ENCODE measurements at regions of chr17 and their contacts with region 1.

Region 1: GRCh38 chr17:27381007-27381501 is 75.2 kb upstream of the KSR1 start:
- DNase-seq: peak; percentile 92
- ATAC-seq: peak; percentile 92
- H3K4me3 Mint-ChIP-seq: no peak overlapping the region
- H3K27ac Mint-ChIP-seq: no peak overlapping the region
- H3K4me1 Mint-ChIP-seq: no peaks in the 10 kb centered on the region
- H3K27me3 Mint-ChIP-seq: no peaks in the 10 kb centered on the region
- CTCF ChIP-seq: peak; percentile 100

Region 2: GRCh38 chr17:27236717-27237315 is 144.2 kb before region 1 on chr17:
- CTCF ChIA-PET with region 1: interaction called, 18 read pairs
- POLR2A ChIA-PET with region 1: no interaction called
- DNase-seq: peak; percentile 71
- ATAC-seq: peak; percentile 53
- H3K4me3 Mint-ChIP-seq: no peak overlapping the region
- H3K27ac Mint-ChIP-seq: no peak overlapping the region
- H3K4me1 Mint-ChIP-seq: peaks cover 7% of the 10 kb centered on the region
- H3K27me3 Mint-ChIP-seq: peaks cover 3% of the 10 kb centered on the region; the same call in 1 of the 2 replicates
- CTCF ChIP-seq: peak; percentile 62

Region 3: GRCh38 chr17:27245230-27245696 is 135.8 kb before region 1 on chr17:
- CTCF ChIA-PET with region 1: interaction called, 23 read pairs
- POLR2A ChIA-PET with region 1: no interaction called
- DNase-seq: peak; percentile 81
- ATAC-seq: peak; percentile 97
- H3K4me3 Mint-ChIP-seq: peak overlapping the region; percentile 2; the same call in 1 of the 2 replicates
- H3K27ac Mint-ChIP-seq: no peak overlapping the region
- H3K4me1 Mint-ChIP-seq: peaks cover 25% of the 10 kb centered on the region
- H3K27me3 Mint-ChIP-seq: peaks cover under 1% of the 10 kb centered on the region; the same call in 1 of the 2 replicates
- CTCF ChIP-seq: no peak

Region 4: GRCh38 chr17:27367121-27367991 is 13.7 kb before region 1 on chr17:
- CTCF ChIA-PET with region 1: interaction called, 11 read pairs
- POLR2A ChIA-PET with region 1: no interaction called
- DNase-seq: no peak
- ATAC-seq: peak; percentile 77
- H3K4me3 Mint-ChIP-seq: no peak overlapping the region
- H3K27ac Mint-ChIP-seq: no peak overlapping the region; the same call in 1 of the 2 replicates
- H3K4me1 Mint-ChIP-seq: peaks cover 16% of the 10 kb centered on the region
- H3K27me3 Mint-ChIP-seq: no peaks in the 10 kb centered on the region
- CTCF ChIP-seq: no peak

Measured in WTC11 (cell line).